Activated T-helper 2 cell treated with anti-CD3 and anti-CD28 coated beads, Interferon-gamma antibody, Interleukin-2, Interleukin-4, amounts not matched to agents 10 μg/mL and 5 μg/mL and 100 μg/mL, durations not matched to agents 14 hours and 24 hours and 36 hours (primary cell): ENCODE measurements at regions of chr16 and their contacts with region 1.

Region 1: DNA sequence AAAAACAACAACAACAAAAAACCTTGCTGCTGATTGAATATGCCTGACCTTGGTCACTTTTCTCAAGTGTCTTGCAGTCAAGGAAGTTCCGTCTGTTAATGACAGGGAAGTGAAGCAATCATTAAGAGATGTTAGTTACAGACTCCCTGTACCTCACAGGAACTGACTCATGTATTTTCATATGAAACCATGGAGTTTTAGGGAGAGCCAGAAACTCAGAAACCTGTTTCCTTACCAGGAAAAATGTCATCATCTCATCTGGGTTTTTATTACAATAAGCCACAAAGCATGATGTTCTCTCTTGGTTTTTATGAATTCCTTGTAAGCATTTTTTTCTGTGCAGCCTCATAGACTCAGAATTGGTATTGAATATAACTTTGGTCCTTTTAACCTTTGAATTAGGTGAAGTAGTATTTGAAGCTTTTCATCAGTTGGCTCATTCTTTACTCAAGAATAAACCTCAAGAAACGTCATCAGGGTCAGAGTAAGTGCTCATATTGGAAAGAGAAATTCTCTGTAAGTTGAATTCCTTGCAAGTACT is 10.3 kb downstream of the LYRM1 start:
- DNase-seq: no peak
- H3K4me3 Mint-ChIP-seq: peak overlapping the region; percentile 17
- H3K27ac Mint-ChIP-seq: peak overlapping the region; percentile 95
- H3K4me1 Mint-ChIP-seq: peaks cover 56% of the 10 kb centered on the region
- H3K27me3 Mint-ChIP-seq: no peaks in the 10 kb centered on the region

Region 2: DNA sequence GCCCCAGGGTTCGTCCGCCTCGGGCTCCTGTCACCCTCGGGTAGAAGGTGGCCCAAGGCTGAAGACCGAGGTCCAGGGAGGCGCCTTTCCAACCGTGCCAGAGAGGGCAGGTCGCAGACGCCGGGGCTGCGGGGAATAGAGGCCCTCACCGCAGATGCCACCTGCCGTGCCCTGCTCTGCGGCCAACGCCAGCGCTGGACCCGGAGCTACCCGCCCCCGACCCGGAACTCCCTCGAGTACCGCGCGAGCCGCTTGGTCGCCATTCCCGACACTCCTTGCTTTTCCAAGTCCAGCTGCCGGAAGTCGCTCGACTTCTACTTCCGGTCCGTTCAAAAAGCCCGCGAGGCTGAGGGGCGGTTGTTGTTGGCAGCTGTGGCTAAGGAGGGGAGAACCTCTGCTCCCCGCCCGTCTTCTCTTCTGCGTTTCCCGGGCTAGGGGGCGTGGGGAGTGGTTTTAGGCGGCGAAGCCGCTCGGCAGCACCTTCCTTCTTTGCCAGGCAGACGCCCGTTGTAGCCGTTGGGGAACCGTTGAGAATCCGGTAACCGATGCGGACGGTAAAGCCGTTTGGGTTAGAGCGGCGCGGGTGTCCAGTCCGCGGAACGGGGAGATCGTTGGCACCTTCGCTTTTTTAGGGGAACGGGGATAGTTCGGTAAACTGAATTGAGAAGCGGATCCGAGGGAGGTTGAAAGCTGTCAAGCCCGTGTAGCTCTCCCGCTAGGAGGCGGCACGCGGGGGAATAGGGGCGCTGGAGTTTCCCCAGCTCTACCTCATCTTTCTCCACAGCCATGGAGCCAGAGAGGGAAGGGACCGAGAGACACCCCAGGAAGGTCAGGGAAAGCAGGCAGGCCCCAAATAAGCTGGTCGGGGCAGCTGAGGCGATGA is 104.4 kb before region 1 on chr16 and contains the starts of genes ERI2 and REXO5:
- intact Hi-C with region 1: loop called (anchors 5 kb)
- DNase-seq: peak; percentile 73
- H3K4me3 Mint-ChIP-seq: peak within 1 kb of the TSS; percentile 97
- H3K27ac Mint-ChIP-seq: peak within 1 kb of the TSS; percentile 91
- H3K4me1 Mint-ChIP-seq: peaks cover 28% of the 10 kb centered on the region
- H3K27me3 Mint-ChIP-seq: no peaks in the 10 kb centered on the region
- total RNA-seq, gene ERI2: 13.2 and 14.4 TPM in 2 replicates
- total RNA-seq, gene REXO5: 11.4 and 11.8 TPM in 2 replicates

Region 3: DNA sequence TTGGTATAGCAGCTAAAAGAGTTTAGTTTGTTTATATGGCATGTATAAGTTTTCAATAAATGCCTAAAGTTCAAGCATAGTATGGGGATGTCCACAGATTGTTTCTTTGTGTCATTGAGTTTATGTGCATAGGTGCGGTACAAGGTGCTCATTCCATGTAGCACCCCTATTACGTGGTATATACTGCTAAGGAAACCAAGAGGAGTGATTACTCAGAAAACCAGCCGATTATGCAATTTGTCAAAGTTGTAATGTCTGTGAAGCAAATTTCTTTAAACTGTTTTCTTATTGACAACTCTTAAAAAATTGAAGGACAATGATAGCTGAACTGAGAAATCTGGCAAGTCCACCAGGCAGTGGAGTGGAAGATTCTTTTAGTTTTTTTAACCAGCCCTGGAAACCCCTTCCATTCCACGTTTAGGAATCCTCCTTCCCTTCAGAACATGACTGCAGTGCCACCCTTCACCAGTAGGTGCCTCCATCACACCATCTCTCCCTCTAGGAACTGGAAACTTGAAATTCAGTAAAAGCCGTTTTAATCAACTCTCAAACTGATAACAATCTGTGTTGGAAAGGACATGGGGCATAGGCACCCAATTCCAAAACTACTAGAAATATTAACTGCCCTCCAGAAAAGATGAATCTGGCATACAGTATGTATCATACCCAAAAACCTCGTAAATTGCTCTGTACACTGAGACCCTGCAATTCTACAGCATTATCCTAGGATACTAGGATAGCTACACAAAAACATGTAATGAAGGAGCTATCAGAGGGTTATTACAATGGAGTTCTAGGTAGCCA is 61.1 kb before region 1 on chr16:
- intact Hi-C with region 1: loop called (anchors 2 kb)
- DNase-seq: peak; percentile 49
- H3K4me3 Mint-ChIP-seq: no peak overlapping the region
- H3K27ac Mint-ChIP-seq: peak overlapping the region; percentile 49
- H3K4me1 Mint-ChIP-seq: peaks cover 26% of the 10 kb centered on the region
- H3K27me3 Mint-ChIP-seq: no peaks in the 10 kb centered on the region

Region 4: DNA sequence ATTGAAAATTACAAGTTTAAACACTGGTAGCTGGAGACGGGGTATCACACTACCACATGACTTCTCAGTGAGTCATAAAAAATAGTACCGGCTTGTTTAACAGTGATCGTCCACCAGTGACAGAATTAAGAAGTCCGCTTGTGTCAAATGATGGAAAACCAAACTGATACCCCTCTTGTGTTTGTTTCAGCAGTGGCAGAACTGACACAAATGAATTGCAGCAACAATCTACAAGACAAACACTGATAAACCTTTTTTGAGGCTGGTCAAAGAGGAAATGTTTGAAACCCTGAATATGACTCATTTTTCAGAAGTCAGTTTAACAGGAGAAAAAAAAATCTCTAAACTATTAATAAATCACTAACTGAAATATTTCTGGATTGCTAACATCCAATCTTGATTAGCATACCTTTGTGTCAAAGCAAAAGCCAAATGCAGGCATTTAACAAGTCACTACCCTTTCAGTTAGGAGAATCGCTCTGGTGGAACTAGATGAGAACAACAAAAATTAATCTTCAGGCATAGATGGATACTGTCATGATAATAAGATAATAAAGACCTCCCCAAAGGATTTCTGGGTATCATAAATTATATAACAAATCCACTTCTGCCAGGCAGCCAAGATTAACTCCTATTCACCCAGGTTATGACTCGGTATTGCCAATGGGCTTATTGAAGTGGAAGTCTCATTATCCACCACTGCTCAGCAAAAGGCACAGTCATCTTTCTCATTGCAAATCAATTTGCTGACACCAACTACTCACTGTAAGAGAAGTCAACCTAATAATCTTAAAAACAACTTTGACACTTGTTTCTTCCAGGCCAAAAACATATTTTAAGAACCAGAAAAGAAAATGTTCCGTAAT is 31.4 kb before region 1 on chr16:
- intact Hi-C with region 1: loop called (anchors 1 kb)
- DNase-seq: no peak
- H3K4me3 Mint-ChIP-seq: no peak overlapping the region
- H3K27ac Mint-ChIP-seq: peak overlapping the region; percentile 76
- H3K4me1 Mint-ChIP-seq: peaks cover 77% of the 10 kb centered on the region
- H3K27me3 Mint-ChIP-seq: no peaks in the 10 kb centered on the region

Region 5: DNA sequence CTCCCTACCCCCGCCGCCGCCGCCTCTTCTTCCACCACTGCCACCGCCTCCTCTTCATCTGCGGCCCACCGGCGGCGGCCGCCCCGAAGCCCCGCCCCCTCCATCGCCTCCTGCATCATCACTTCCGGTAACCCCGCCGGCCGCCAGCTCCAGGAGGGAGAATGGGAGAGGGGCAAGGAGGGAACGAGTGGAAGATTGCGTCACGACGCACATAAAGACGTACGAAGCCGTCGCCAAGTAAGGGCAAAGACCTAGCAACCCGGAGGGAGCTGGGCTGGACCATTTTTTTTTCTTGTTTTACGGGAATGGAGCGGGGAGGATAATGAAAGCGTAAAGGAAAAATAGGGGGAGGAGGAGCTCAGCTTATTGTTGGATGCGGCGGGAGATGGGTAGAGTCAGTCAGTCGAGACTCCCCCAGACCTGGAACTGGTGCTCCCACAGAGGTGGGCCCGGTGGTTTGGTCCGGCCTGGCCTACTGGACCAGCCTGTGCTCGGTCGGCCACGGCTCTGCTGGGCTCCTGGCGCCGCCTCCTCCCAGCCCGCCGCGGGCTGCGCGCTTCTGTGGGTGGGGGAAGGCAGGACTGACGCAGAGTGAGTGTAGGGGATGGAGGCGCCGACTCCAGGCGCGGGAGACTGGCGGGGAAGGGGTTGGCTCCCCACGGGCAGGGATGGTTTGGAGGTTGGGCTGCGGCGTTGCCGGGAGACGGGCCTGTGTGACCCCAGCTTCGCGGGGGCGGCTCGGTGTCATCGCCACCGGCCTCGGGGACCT is 10.4 kb before region 1 on chr16 and contains the starts of genes DCUN1D3 and LYRM1:
- intact Hi-C with region 1: loop called (anchors 1 kb)
- DNase-seq: peak; percentile 82
- H3K4me3 Mint-ChIP-seq: peak within 1 kb of the TSS; percentile 90
- H3K27ac Mint-ChIP-seq: peak within 1 kb of the TSS; percentile 97
- H3K4me1 Mint-ChIP-seq: peaks cover 73% of the 10 kb centered on the region
- H3K27me3 Mint-ChIP-seq: no peaks in the 10 kb centered on the region
- total RNA-seq, gene DCUN1D3: 17.4 and 19.2 TPM in 2 replicates
- total RNA-seq, gene LYRM1: 30.5 and 34.7 TPM in 2 replicates

Region 6: DNA sequence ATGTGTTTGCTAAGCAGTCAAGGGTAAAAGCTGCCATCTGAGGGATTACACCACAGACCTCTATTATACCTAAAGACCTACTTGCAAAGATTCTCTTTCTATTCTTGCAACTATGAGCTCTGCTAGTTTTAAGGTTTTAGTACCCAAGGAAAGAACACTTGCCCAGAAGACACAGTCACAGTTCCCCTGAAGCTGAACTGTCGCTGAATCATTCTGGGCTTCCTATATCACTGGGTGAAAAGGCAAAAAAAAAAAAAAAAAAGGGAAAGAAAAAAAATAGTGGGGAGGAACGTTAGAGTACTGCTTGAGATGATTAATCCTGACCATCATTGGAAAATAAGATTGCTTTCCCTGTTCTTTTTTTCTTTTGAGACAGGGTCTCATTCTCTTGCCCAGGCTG is 27.6 kb after region 1 on chr16:
- intact Hi-C with region 1: loop called (anchors 1 kb)
- DNase-seq: no peak
- H3K4me3 Mint-ChIP-seq: no peak overlapping the region
- H3K27ac Mint-ChIP-seq: peak overlapping the region; percentile 82
- H3K4me1 Mint-ChIP-seq: peaks cover 42% of the 10 kb centered on the region
- H3K27me3 Mint-ChIP-seq: no peaks in the 10 kb centered on the region

Region 7: DNA sequence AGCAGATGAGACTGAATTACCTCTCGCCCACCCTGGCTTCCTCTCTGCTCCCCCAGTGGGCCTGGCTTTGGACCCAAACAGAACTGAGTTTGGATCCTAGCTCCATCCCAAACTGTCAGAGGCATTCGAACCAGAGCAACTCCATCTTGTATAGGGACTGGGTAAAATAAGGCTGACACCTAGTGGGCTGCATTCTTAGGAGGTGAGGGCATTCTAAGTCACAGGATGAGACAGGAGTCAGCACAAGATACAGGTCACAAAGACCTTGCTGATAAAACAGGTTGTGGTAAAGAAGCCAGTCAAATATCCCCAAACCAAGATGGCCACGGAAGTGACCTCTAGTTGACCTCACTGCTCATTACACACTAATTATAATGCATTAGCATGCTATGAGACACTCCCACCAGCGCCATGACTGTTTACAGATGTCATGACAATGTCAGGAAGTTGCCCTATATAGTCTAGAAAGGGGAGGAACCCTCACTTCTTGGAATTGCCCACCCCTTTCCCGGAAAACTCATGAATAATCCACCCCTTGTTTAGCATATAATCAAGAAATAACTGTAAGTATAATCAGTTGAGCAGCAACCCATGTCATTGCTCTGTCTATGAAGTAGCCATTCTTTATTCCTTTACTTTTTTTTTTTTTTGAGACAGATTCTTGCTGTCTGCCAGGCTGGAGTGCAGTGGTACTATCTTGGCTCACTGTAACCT is 34.2 kb after region 1 on chr16:
- intact Hi-C with region 1: loop called (anchors 1 kb)
- DNase-seq: peak; percentile 69
- H3K4me3 Mint-ChIP-seq: no peak overlapping the region
- H3K27ac Mint-ChIP-seq: peak overlapping the region; percentile 83
- H3K4me1 Mint-ChIP-seq: peaks cover 51% of the 10 kb centered on the region
- H3K27me3 Mint-ChIP-seq: peaks cover 4% of the 10 kb centered on the region

Region 8: GRCh38 chr16:21001262-21001661 is 90.4 kb after region 1 on chr16:
- intact Hi-C with region 1: no loop called
- DNase-seq: no peak
- H3K4me3 Mint-ChIP-seq: no peak overlapping the region
- H3K27ac Mint-ChIP-seq: no peak overlapping the region
- H3K4me1 Mint-ChIP-seq: peaks cover 3% of the 10 kb centered on the region
- H3K27me3 Mint-ChIP-seq: peaks cover 10% of the 10 kb centered on the region

Region 9: DNA sequence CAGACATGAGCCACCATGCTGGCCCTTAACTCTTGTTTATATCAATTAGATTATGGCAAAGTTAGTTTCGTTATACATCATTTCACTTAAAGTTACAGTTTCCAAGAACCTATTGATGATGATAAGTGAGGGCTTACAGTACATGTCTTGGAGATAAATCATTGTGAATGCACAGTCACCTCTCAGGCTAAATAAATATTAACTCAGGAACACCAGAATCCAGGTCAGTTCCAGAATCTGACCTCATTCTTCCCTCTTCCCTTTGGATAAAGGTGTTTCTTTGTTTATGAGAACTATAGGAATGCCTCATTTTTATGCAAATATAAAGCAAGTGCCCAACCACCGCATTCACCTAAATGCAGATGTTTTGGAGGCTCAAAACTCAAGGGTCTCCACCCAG is 415.6 kb after region 1 on chr16:
- intact Hi-C with region 1: no loop called
- DNase-seq: no peak
- H3K4me3 Mint-ChIP-seq: no peak overlapping the region
- H3K27ac Mint-ChIP-seq: no peak overlapping the region
- H3K4me1 Mint-ChIP-seq: no peaks in the 10 kb centered on the region
- H3K27me3 Mint-ChIP-seq: peaks cover 6% of the 10 kb centered on the region

Region 10: DNA sequence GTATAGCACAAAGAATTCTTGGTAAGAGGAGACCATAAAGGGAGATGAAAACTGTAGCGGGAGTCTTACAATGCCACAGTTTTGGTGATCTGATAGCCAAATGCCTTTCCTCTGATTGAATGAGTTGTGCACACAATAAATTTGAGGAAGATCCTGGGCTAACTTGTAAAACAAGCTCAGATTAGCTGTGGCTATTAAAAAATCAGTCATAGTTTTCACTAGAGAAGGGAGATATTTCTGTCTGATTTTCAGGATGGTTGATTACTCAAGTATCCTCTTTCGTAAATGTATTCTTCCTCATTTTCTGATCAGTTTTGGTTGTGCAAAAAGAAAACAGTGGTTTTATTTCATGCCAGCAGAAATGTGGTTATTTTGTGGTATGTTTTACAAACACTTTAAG is 679.4 kb after region 1 on chr16:
- intact Hi-C with region 1: no loop called
- DNase-seq: no peak
- H3K4me3 Mint-ChIP-seq: no peak overlapping the region
- H3K27ac Mint-ChIP-seq: no peak overlapping the region
- H3K4me1 Mint-ChIP-seq: peaks cover 3% of the 10 kb centered on the region
- H3K27me3 Mint-ChIP-seq: no peaks in the 10 kb centered on the region